Activated B cell treated with CpG ODN at 0.5 μM for 24 hours (primary cell): ENCODE measurements at regions of chr1 and their contacts with region 1.

Region 1: GRCh38 chr1:220089650-220090556 is at the start of gene BPNT1:
- DNase-seq: peak; percentile 88
- ATAC-seq: peak; percentile 69
- H3K4me3 Mint-ChIP-seq: peak within 1 kb of the TSS; percentile 95
- H3K27ac Mint-ChIP-seq: peak within 1 kb of the TSS; percentile 96
- H3K4me1 Mint-ChIP-seq: peaks cover 34% of the 10 kb centered on the region
- H3K27me3 Mint-ChIP-seq: no peaks in the 10 kb centered on the region
- CTCF ChIP-seq: no peak
- total RNA-seq, gene BPNT1: 22.8 and 23.6 TPM in 2 replicates

Region 2: DNA sequence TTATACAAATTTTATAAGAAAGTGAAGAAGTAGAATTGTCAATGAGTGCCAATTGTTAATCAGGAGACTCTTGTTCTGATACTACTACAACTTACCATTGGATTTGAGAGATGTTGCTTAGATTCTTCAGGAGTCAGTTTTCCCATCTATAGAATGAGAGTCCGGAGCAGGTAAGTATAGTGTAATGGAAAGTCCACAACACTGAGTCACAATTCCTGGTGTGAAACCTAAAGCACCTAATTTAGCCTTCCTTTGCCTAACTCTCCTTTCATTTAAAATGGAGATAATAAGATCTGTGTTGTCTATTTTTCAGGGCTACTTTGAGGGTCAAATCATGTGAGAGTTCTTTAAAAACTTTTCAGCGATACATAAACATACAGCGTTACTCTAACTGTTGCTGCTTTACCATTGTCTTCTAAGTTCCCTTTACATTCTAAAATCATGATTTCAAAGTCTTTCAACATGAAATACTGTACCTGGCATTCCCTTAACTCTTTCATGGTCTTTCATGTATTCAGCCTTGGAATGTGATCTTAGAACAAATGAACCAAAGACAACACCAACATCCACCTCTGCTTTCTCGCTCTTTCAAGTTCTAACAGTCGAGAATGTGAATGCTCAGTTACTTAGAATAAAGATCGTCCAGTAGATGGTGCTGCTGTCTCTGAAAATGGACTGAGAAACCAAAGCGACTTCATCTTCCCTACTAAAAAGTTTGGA is 252.5 kb before region 1 on chr1:
- CTCF ChIA-PET with region 1: no interaction called
- POLR2A ChIA-PET with region 1: no interaction called
- intact Hi-C with region 1: loop called (anchors 5 kb)
- DNase-seq: no peak
- ATAC-seq: no peak
- H3K4me3 Mint-ChIP-seq: no peak overlapping the region
- H3K27ac Mint-ChIP-seq: no peak overlapping the region
- H3K4me1 Mint-ChIP-seq: no peaks in the 10 kb centered on the region
- H3K27me3 Mint-ChIP-seq: peaks cover 25% of the 10 kb centered on the region
- CTCF ChIP-seq: no peak

Region 3: GRCh38 chr1:220046052-220046930 is 43.6 kb before region 1 on chr1 and contains the start of gene EPRS1:
- CTCF ChIA-PET with region 1: no interaction called
- POLR2A ChIA-PET with region 1: interaction called, 9 read pairs
- intact Hi-C with region 1: loop called (anchors 1 kb)
- DNase-seq: peak; percentile 89
- ATAC-seq: peak; percentile 99
- H3K4me3 Mint-ChIP-seq: peak within 1 kb of the TSS; percentile 97
- H3K27ac Mint-ChIP-seq: peak within 1 kb of the TSS; percentile 93
- H3K4me1 Mint-ChIP-seq: peaks cover 26% of the 10 kb centered on the region
- H3K27me3 Mint-ChIP-seq: no peaks in the 10 kb centered on the region
- CTCF ChIP-seq: peak; percentile 21
- total RNA-seq, gene EPRS1: 114 and 119 TPM in 2 replicates

Region 4: GRCh38 chr1:220272047-220272840 is 182.3 kb after region 1 on chr1 and contains the start of gene RAB3GAP2:
- CTCF ChIA-PET with region 1: no interaction called
- POLR2A ChIA-PET with region 1: interaction called, 4 read pairs
- intact Hi-C with region 1: loop called (anchors 1 kb)
- DNase-seq: peak; percentile 94
- ATAC-seq: peak; percentile 91
- H3K4me3 Mint-ChIP-seq: no peak within 1 kb of the TSS
- H3K27ac Mint-ChIP-seq: no peak within 1 kb of the TSS
- H3K4me1 Mint-ChIP-seq: peaks cover 16% of the 10 kb centered on the region
- H3K27me3 Mint-ChIP-seq: peaks cover 7% of the 10 kb centered on the region
- CTCF ChIP-seq: no peak
- total RNA-seq, gene RAB3GAP2: 93.3 and 107 TPM in 2 replicates

Region 5: DNA sequence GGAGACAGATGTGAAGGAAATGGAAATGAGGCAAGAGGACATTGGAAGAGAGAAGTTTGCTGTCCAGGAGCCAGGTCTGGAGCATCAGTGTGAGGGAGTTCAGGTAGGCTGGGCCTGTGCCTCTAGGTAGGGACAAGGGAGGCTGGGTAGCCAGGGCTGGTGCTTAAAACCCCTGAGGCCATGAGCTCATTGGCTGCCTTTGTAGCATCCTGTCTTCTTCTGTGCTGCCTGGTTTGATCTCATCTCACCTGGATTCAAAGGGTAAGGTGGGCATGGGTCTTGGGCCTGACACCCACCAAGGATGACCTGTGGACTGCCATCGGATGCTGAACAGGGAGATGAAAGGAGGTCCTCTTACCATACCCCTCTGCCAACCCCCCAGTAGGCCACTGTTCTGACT is 607.8 kb after region 1 on chr1:
- CTCF ChIA-PET with region 1: no interaction called
- POLR2A ChIA-PET with region 1: interaction called, 11 read pairs
- intact Hi-C with region 1: loop called (anchors 5 kb)
- DNase-seq: no peak
- ATAC-seq: no peak
- H3K4me3 Mint-ChIP-seq: no peak overlapping the region
- H3K27ac Mint-ChIP-seq: no peak overlapping the region
- H3K4me1 Mint-ChIP-seq: peaks cover 9% of the 10 kb centered on the region
- H3K27me3 Mint-ChIP-seq: peaks cover 2% of the 10 kb centered on the region
- CTCF ChIP-seq: no peak